Prostate gland (tissue), 2 donors: ENCODE measurements at regions of chr18 and their contacts with region 1.

Region 1: GRCh38 chr18:67568166-67568565 is 51.6 kb upstream of the DSEL start:
- DNase-seq: no peak
- H3K4me3 ChIP-seq: no peak overlapping the region
- H3K27ac ChIP-seq: no peak overlapping the region
- H3K4me1 ChIP-seq: no peaks in the 10 kb centered on the region
- H3K27me3 ChIP-seq: no peaks in the 10 kb centered on the region
- CTCF ChIP-seq: no peak
- POLR2A ChIP-seq: no peak

Region 2: DNA sequence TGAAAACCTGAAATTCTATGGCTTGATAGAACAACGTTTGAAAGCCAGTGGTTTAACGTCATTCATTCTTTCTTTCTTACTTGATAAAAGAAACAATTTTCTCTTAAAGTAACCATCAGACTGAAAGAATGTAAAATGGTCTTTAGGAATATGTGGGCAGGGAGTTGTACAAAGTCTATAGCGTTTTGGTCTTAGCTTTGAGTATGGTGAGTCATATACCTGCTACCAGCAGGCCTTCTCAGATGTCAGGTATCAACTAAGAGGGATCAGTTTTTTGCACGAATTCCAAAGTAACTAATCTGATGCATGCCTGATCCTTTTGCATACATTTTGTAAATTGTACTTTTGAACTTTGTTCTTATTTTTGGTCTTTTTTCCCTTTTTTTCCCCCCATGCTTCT is 49.9 kb after region 1 on chr18:
- intact Hi-C with region 1: loop called (anchors 5 kb)
- DNase-seq: no peak
- H3K4me3 ChIP-seq: no peak overlapping the region
- H3K27ac ChIP-seq: no peak overlapping the region
- H3K4me1 ChIP-seq: no peaks in the 10 kb centered on the region
- H3K27me3 ChIP-seq: no peaks in the 10 kb centered on the region
- CTCF ChIP-seq: no peak
- POLR2A ChIP-seq: no peak